Sciatic nerve (tissue), 2 donors: ENCODE measurements at regions of chr21 and their contacts with region 1.

Region 1: GRCh38 chr21:35314857-35315582 is 265.9 kb upstream of the RUNX1 start:
- DNase-seq: no peak
- ATAC-seq: no peak

Region 2: DNA sequence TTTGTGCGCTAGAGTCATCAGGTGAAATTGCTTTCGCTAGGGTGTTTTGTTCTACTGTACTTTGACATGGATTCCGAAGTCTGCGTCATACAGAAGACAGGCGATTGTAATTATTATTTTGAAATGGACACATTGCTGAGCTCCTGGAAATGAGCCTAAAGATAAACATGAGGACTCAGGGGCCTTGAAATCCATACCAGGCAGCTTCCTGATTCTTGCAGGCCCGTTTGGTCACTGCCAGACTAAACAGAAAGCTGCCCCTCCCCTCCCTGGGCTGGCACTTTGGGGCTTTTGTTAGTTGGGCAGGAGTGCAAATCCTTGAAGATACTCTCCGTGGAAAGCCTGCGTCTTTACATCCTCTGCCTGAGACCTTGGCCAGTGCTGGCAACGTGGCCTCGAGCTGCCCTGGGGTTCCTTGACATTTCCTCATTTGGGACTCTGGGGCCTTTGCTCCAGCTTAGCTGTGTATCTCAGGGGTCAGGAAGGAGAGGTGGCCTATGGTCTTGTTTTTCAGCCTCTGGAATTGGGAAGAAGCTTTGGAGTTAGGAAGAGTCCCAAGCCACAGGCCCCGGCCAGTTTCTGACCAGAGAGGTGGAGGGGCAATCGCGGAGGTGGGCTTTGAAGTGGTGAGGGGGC is 978.1 kb before region 1 on chr21:
- intact Hi-C with region 1: loop called (anchors 5 kb)
- DNase-seq: no peak
- ATAC-seq: peak; percentile 6

Region 3: GRCh38 chr21:35057428-35057827 is 257.6 kb before region 1 on chr21:
- intact Hi-C with region 1: no loop called
- DNase-seq: no peak
- ATAC-seq: no peak

Region 4: GRCh38 chr21:35438643-35439404 is 123.8 kb after region 1 on chr21:
- intact Hi-C with region 1: no loop called
- DNase-seq: no peak
- ATAC-seq: no peak